Heart right ventricle (tissue), 16 donors: ENCODE measurements at regions of chr18 and their contacts with region 1.

Region 1: GRCh38 chr18:35580701-35581539 is 620 bp upstream of the GALNT1 start:
- DNase-seq: peak; percentile 51 to 69
- ATAC-seq: peak; percentile 78 to 89 (median 84)
- H3K4me3 ChIP-seq: peak overlapping the region; percentile 15 to 86 (median 80)
- H3K27ac ChIP-seq: peak overlapping the region; percentile 86 to 99 (median 96)
- H3K4me1 ChIP-seq: peaks cover 0 to 30% (median 24%) of the 10 kb centered on the region in 9 donors
- H3K27me3 ChIP-seq: no peaks in the 10 kb centered on the region
- CTCF ChIP-seq: no peak

Region 2: DNA sequence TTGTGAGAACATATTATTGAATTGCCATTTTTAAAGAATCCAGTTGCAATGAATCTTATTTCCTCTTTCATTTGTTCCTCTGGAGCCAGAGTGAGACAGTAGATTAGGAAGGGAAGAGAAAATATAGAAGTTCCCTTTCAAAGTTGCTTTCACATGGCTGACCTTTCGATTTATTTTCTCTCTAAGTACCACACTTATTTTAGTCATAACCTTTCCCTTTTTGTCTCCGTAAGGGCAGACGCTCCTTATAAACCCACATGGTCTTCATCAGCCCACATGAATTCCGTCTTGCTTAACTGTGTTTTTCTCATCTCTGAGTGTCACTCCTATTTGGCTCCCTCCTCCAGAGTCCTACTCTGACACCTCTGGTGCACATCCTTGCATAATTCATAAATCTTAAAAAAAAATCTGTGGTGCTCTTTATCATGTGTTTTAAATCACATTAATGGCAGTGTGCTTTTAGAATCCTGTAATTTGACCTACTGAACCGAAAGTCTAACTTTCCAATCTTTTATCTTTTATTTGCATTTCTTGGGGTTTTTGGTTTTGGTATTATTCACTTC is 165.3 kb before region 1 on chr18:
- intact Hi-C with region 1: loop called in 3 of 10 experiments (anchors 10 kb)
- DNase-seq: no peak
- ATAC-seq: peak in 1 of 8 donors; percentile 48
- H3K4me3 ChIP-seq: peak overlapping the region in 1 of 10 donors; percentile 10
- H3K27ac ChIP-seq: peak overlapping the region in 1 of 10 donors; percentile 7
- H3K4me1 ChIP-seq: peaks cover 0 to 28% (median 4%) of the 10 kb centered on the region in 9 donors
- H3K27me3 ChIP-seq: no peaks in the 10 kb centered on the region
- CTCF ChIP-seq: no peak

Region 3: GRCh38 chr18:35508746-35509338 is 72.1 kb before region 1 on chr18:
- intact Hi-C with region 1: loop called in 1 of 10 experiments (anchors 5 kb)
- DNase-seq: no peak
- ATAC-seq: peak in 2 of 8 donors; percentile 21 to 67
- H3K4me3 ChIP-seq: no peak overlapping the region
- H3K27ac ChIP-seq: no peak overlapping the region
- H3K4me1 ChIP-seq: peaks cover 0 to 18% (median 2%) of the 10 kb centered on the region in 9 donors
- H3K27me3 ChIP-seq: peaks cover 0 to 6% (median 0%) of the 10 kb centered on the region in 7 donors
- CTCF ChIP-seq: no peak

Region 4: DNA sequence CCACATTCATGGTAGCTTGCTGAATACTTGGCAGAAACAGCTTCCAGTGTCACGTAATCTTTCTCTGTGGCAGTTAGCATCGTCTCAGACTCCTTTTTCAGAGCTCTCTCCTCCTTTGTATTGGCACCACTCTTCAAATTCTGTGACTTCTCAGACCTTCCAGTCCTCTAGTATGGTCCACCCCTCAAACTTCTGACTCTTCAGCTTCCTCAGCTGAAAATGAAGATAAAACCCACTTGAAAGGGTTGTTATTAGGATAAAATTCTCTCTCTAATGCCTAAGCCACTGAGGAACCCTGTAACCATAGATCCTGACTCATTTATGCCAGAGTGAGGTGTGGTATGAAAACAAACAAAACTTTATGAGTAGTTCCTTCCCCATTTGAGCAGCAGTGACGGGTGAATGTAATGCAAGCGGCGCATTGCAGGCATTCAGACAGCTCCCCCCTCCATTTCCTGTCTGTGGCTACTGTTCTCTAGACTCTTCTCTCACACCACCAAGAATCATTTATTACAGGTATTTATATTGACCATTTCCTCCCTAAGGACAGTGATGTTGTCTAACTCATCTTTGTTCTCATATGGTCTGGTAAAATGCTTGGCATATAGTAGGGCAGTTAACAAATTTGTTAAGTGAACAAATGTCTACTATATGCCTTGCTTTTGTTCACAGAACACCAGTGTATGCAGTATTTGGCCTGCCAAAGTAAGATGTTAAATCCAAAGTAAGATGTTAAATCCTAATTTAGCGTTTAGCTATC is 35.9 kb after region 1 on chr18:
- intact Hi-C with region 1: loop called in 2 of 10 experiments (anchors 5 kb)
- DNase-seq: peak in 1 of 2 donors; percentile 14
- ATAC-seq: peak in 7 of 8 donors; percentile 35 to 73 (median 54)
- H3K4me3 ChIP-seq: no peak overlapping the region
- H3K27ac ChIP-seq: peak overlapping the region in 2 of 10 donors; percentile 35 to 69
- H3K4me1 ChIP-seq: peaks cover 0 to 64% (median 48%) of the 10 kb centered on the region in 9 donors
- H3K27me3 ChIP-seq: no peaks in the 10 kb centered on the region
- CTCF ChIP-seq: no peak

Region 5: DNA sequence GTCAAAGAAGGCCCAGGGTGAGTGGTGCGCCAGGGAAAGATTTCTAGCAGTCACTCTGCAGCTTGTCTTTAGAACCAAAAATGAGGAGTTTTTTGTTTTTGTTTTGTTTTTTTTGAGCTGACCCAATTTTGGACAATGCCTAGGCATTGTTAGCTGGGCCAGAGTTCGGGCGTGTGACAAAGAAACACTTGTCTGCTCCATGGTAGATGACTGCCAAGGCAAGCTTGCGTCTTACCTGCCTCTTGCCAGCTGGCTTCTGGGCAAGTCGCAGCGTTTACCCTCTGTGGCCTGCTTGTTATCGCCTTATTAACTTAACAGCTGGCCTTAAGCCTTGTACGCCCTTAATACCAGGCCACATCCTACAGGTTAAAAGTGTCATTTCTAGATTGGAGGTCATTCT is 114.9 kb after region 1 on chr18:
- intact Hi-C with region 1: loop called in 3 of 10 experiments (anchors 10 kb)
- DNase-seq: peak; percentile 69 to 77
- ATAC-seq: peak; percentile 83 to 98 (median 95)
- H3K4me3 ChIP-seq: no peak overlapping the region
- H3K27ac ChIP-seq: peak overlapping the region in 8 of 10 donors; percentile 49 to 72 (median 61)
- H3K4me1 ChIP-seq: peaks cover 0 to 28% (median 19%) of the 10 kb centered on the region in 9 donors
- H3K27me3 ChIP-seq: no peaks in the 10 kb centered on the region
- CTCF ChIP-seq: no peak